ENCODE measurements at regions of chr11 and their contacts with region 1.

Region 1: DNA sequence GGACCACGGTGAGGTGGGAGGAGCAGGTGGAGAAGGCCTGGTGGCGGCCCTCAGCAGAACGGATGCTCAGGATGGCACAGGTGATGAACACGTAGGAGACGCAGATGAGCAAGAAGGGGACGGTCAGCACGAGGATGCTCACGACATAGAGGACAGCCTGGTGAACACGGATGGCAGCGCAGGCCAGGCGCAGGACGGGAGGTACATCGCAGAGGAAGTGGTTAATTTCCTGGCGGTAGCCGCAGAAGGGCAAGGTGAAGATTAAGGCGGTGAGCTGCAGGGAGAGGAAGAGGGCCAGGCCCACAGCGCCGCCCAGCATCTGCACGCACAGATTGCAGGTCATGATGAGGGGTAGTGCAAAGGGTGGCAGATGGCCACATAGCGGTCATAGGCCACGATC is 24.0 kb upstream of the OR10W1 start:
- DNase-seq: no peak
- H3K4me3 Mint-ChIP-seq: no peak overlapping the region
- H3K27ac Mint-ChIP-seq: no peak overlapping the region
- H3K4me1 Mint-ChIP-seq: no peaks in the 10 kb centered on the region
- H3K27me3 Mint-ChIP-seq: peaks cover 2% of the 10 kb centered on the region

Region 2: GRCh38 chr11:58227956-58228615 is 63.9 kb before region 1 on chr11:
- intact Hi-C with region 1: loop called (anchors 10 kb)
- DNase-seq: no peak
- H3K4me3 Mint-ChIP-seq: no peak overlapping the region
- H3K27ac Mint-ChIP-seq: no peak overlapping the region
- H3K4me1 Mint-ChIP-seq: no peaks in the 10 kb centered on the region
- H3K27me3 Mint-ChIP-seq: no peaks in the 10 kb centered on the region

Region 3: GRCh38 chr11:58495906-58496305 is 203.9 kb after region 1 on chr11:
- intact Hi-C with region 1: no loop called
- DNase-seq: no peak
- H3K4me3 Mint-ChIP-seq: no peak overlapping the region
- H3K27ac Mint-ChIP-seq: no peak overlapping the region
- H3K4me1 Mint-ChIP-seq: peaks cover 7% of the 10 kb centered on the region
- H3K27me3 Mint-ChIP-seq: no peaks in the 10 kb centered on the region

Region 4: DNA sequence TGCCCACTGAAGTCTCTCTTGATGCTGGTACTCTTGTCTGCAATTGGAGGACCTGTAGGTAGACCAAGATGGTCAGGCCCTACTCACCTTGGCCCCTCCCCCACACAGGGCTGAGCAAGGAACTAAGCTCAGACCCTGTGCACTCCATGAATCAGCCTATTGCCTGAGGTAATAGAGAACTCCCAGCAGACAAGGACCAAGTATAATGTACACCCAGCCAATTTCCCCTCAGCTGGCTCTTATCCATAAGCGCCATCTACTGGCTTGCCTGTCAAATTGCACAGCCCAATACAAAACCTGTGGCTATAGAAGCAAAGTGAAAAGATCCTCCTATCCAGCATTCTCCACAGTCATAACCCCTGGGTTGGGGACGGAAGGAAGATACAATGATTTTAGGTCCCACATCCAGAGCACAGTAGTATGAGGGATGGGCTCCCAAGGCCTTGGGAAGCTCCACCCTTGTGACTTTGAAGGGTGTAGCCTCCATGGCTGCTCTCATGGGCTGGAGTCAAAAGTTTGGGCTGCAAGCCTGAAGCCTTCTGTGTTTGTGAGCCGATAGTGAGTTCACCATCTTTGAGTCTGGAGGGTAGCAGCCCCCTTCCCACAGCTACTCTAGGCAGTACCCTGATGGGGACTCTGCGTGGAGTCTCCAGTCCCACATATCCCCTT is 496.5 kb after region 1 on chr11:
- intact Hi-C with region 1: no loop called
- DNase-seq: peak; percentile 34
- H3K4me3 Mint-ChIP-seq: no peak overlapping the region
- H3K27ac Mint-ChIP-seq: no peak overlapping the region
- H3K4me1 Mint-ChIP-seq: no peaks in the 10 kb centered on the region
- H3K27me3 Mint-ChIP-seq: peaks cover 5% of the 10 kb centered on the region

Measured in activated T-helper 1 cell treated with anti-CD3 and anti-CD28 coated beads, Interleukin-12 subunit alpha, Interleukin-12 subunit beta, Interleukin-2, Interleukin-4 antibody, amounts not matched to agents 30 ng/mL and 10 ng/mL and 1 ng/mL, durations not matched to agents 14 hours and 24 hours and 36 hours (primary cell).